ENCODE measurements at regions of chr11 and their contacts with region 1.

Region 1: GRCh38 chr11:48172818-48173609 is 43.6 kb upstream of the OR4B1 start:
- DNase-seq: peak; percentile 76
- H3K4me3 ChIP-seq: peak overlapping the region in 1 of 2 experiments; percentile 52; a peak in 1 of 4 replicates
- H3K27ac ChIP-seq: no peak overlapping the region
- H3K4me1 ChIP-seq: peaks cover 0 to 3% of the 10 kb centered on the region in 2 experiments; a peak in 2 of 4 replicates
- H3K27me3 ChIP-seq: no peaks in the 10 kb centered on the region
- CTCF ChIP-seq: peak; percentile 97
- EP300 ChIP-seq: no peak
- RAD21 ChIP-seq: peak; percentile 86

Region 2: GRCh38 chr11:48043111-48043990 is 129.7 kb before region 1 on chr11:
- CTCF ChIA-PET with region 1: no interaction called
- POLR2A ChIA-PET with region 1: no interaction called
- DNase-seq: no peak
- H3K4me3 ChIP-seq: no peak overlapping the region
- H3K27ac ChIP-seq: no peak overlapping the region
- H3K4me1 ChIP-seq: no peaks in the 10 kb centered on the region
- H3K27me3 ChIP-seq: no peaks in the 10 kb centered on the region
- CTCF ChIP-seq: no peak
- EP300 ChIP-seq: no peak
- RAD21 ChIP-seq: no peak

Region 3: GRCh38 chr11:48184446-48184845 is 11.4 kb after region 1 on chr11:
- CTCF ChIA-PET with region 1: interaction called, 18 read pairs
- POLR2A ChIA-PET with region 1: no interaction called
- DNase-seq: no peak
- H3K4me3 ChIP-seq: no peak overlapping the region
- H3K27ac ChIP-seq: no peak overlapping the region
- H3K4me1 ChIP-seq: no peaks in the 10 kb centered on the region
- H3K27me3 ChIP-seq: peaks cover 6% of the 10 kb centered on the region; the same call in 1 of the 2 replicates
- CTCF ChIP-seq: no peak
- EP300 ChIP-seq: no peak
- RAD21 ChIP-seq: no peak

Region 4: DNA sequence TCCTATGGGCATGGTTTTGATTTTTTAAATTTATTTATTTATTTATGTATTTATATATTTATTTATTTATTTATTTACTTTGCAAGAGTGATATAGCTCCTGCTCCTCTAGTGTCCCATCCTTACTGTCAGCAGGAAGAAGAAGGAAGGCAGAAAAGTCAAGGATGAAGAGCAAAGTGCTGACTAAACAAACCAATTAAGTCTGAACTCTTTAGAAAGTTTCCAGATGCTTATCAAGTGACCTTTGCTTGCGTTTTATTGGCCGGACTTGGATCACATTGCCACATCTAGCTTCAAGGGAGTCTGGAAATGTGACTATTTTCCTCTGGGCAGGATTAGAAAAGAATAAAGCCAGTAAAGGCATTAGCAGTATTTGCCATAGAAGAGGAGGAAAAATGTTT is 34.9 kb after region 1 on chr11:
- CTCF ChIA-PET with region 1: no interaction called
- POLR2A ChIA-PET with region 1: no interaction called
- DNase-seq: no peak
- H3K4me3 ChIP-seq: no peak overlapping the region
- H3K27ac ChIP-seq: no peak overlapping the region
- H3K4me1 ChIP-seq: no peaks in the 10 kb centered on the region
- H3K27me3 ChIP-seq: no peaks in the 10 kb centered on the region; the same call in 1 of the 2 replicates
- CTCF ChIP-seq: no peak
- EP300 ChIP-seq: no peak
- RAD21 ChIP-seq: no peak